ENCODE measurements at regions of chr3 and their contacts with region 1.

Region 1: DNA sequence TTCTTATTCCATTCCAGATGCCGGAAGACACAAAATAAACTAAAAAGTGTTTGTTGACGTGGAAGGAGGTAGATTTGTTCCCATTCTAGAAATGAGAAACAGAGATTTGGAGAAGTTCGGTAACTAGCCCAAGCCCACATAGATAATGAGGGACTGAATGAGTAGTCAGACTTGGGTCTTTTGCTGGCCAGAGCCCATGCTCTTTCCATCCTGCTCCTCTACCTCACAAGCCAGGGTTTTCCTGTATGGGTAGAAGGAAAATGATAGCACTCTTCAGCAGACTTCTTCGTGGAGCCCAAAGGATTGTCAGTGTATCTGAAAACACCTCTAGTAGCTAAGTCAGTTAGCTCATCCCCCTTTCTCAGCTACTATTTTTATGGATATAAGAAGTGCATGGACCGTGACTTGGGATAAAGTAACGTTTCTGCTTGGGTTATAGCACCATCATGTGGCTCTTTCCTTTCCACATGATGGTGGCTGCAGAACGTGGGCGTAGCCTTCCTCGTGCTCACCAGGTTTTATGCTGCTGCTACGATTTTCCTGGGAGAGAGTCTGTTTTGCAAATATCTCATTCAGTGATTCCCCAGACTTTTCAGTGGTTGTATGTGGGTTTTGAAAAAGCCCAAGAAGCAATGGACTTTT is 84.6 kb downstream of the DGKG start:
- DNase-seq: no peak
- H3K4me3 ChIP-seq: no peak overlapping the region
- CTCF ChIP-seq: peak; percentile 58

Region 2: DNA sequence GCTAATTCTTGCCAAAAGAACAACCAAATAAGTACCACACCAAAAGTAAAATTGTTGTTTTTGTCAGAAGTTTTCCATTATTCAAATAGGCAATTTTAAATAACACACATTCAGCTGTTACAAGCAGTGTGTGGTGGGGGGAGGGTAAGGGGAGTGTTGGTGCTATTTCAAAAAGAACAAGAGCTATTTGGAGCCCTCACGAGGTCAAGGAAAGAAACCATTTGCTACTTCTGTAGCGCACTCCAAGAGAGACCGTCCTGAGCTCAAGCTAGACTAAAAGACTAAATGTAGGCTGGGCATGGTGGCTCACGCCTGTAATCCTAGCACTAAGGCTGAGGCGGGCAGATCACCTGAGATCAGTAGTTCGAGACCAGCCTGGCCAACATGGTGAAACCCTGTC is 431.4 kb before region 1 on chr3:
- CTCF ChIA-PET with region 1: no interaction called
- POLR2A ChIA-PET with region 1: no interaction called
- DNase-seq: no peak
- H3K4me3 ChIP-seq: no peak overlapping the region
- CTCF ChIP-seq: no peak

Region 3: DNA sequence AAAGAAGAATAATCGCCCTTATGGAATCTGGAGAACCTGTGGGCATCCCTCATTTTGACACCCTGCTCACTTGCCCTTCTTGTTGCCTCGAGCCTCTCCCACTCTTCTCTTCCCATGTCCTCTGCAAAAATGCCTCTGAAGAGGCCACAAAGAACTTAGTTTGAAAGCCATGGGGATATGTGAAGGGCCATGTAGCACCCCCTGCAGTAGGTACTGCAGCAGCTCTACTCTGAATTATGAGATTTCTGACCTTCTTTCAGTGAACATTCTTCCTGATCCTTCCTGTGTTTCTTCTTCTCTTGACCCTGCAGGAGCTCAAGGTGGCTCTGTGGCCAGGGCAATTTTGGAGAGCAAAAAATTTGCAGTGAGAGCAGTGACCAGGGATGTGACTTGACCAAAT is 309.2 kb before region 1 on chr3:
- CTCF ChIA-PET with region 1: interaction called, 11 read pairs
- POLR2A ChIA-PET with region 1: no interaction called
- DNase-seq: no peak
- H3K4me3 ChIP-seq: no peak overlapping the region
- CTCF ChIP-seq: no peak

Region 4: DNA sequence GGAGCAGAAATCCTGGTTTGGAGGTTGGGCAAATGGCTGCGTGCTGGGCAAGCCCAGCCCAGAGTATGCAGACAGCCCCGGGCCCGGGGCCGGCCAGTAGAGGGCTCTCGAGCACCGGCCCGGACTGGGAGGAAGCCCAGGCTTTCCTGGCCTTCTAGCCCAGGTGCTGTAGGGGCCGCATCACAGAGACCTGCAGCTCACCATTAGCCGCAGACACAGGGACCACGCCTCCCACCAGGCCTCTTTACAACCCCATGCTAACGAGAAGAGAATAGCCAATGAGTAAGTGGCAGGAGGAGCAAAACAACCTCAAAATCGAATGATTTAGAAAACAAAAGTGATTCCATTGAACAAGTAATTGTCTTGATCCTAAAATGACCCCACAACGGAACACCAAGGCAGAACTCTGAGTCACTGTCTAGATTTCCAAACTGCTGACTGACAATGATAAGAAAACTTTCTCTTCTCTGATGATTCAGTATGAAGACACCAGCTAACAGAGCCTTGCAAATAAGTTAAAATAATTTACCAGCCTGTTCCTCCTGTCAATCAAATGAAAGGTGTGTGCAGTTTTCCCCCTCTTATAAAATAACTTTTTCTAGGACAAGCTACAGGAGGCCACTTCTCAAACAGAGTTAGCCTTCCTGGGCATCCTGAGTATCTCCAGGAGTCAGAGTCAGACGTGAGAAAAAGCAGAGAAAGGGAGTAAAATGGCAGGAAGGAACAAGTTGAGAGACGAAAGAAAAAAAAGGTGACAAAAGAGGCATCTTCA is 17.6 kb before region 1 on chr3:
- CTCF ChIA-PET with region 1: interaction called, 39 read pairs
- POLR2A ChIA-PET with region 1: no interaction called
- DNase-seq: peak; percentile 36
- H3K4me3 ChIP-seq: no peak overlapping the region
- CTCF ChIP-seq: peak; percentile 86

Measured in AG04449 (cell line).